ENCODE measurements at regions of chr1 and their contacts with region 1.

Region 1: DNA sequence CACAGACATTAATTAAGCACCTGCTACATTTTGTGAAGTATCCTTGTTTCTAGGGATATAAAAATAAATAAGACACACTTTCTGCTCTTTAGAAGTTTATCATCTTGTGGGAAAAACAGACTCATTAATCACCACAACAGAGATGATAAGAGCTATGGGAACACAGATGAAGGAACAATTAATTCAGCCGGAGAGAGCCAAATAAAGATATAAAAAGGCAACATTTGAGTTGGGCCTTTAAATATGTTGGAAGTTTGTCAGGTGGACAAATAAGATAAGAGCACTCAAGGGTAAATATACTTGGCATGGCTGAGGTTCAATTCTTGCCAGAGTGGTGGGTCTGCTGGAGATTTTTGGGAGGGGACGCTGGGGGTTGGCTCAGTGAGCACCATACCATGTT is 34.2 kb upstream of the VTCN1 start:
- DNase-seq: no peak
- H3K4me3 Mint-ChIP-seq: no peak overlapping the region
- H3K27ac Mint-ChIP-seq: no peak overlapping the region
- H3K4me1 Mint-ChIP-seq: no peaks in the 10 kb centered on the region
- H3K27me3 Mint-ChIP-seq: peaks cover 11% of the 10 kb centered on the region

Region 2: DNA sequence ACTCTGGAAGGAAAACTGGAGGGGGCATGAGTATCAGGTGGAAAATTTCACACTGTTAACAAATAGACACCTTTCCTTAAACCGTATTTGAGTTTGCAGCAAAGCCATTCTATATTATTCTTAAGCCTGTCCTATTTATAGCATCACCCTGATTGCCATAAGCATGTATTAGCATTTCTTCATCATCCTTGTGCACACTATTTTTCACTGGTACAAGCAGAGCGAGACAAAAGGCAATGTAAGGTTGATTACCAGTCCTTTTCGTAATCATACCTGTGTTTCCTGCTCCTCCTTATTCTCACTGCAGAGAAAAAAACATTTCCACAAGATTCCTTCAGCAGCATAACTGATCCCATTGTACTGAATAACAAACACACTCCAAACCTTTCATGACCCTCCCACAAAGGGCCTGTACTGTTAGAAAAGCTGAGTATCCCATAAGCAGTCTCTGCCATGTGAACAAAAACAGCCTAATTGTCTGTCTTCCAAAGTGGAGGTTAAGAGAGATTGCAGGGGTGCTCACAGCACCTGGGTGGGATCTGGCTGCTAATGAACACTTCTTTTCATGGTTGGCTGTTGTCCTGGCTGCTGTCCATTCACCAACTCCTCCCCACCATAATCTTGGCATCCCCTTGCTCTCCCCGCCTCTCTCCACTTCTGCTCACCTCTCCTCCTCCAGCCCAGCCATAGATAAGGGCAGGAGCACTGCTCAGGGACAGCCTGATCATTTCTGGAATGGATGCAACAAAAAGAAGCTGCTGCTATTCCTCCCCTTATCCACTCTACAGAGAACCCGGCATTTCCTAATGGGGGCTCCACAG is 64.6 kb before region 1 on chr1:
- CTCF ChIA-PET with region 1: no interaction called
- intact Hi-C with region 1: loop called (anchors 10 kb)
- DNase-seq: no peak
- H3K4me3 Mint-ChIP-seq: no peak overlapping the region
- H3K27ac Mint-ChIP-seq: no peak overlapping the region
- H3K4me1 Mint-ChIP-seq: no peaks in the 10 kb centered on the region
- H3K27me3 Mint-ChIP-seq: no peaks in the 10 kb centered on the region